Activated CD4-positive, alpha-beta memory T cell treated with anti-CD3 and anti-CD28 coated beads for 36 hours (primary cell): ENCODE measurements at regions of chr11 and their contacts with region 1.

Region 1: GRCh38 chr11:18634140-18635032 is at the start of gene SPTY2D1:
- DNase-seq: peak; percentile 99
- H3K4me3 Mint-ChIP-seq: peak within 1 kb of the TSS; percentile 89
- H3K27ac Mint-ChIP-seq: peak within 1 kb of the TSS; percentile 99
- H3K4me1 Mint-ChIP-seq: peaks cover 22% of the 10 kb centered on the region
- H3K27me3 Mint-ChIP-seq: no peaks in the 10 kb centered on the region
- total RNA-seq, gene SPTY2D1: 18.7 to 23.4 TPM

Region 2: GRCh38 chr11:18012863-18013781 is 621.3 kb before region 1 on chr11 and contains the start of gene SERGEF:
- CTCF ChIA-PET with region 1: no interaction called
- POLR2A ChIA-PET with region 1: no interaction called
- intact Hi-C with region 1: loop called (anchors 1 kb)
- DNase-seq: peak; percentile 95
- H3K4me3 Mint-ChIP-seq: peak within 1 kb of the TSS; percentile 93
- H3K27ac Mint-ChIP-seq: peak within 1 kb of the TSS; percentile 88
- H3K4me1 Mint-ChIP-seq: peaks cover 40% of the 10 kb centered on the region
- H3K27me3 Mint-ChIP-seq: no peaks in the 10 kb centered on the region
- total RNA-seq, gene SERGEF: 42.7 to 44.2 TPM

Region 3: DNA sequence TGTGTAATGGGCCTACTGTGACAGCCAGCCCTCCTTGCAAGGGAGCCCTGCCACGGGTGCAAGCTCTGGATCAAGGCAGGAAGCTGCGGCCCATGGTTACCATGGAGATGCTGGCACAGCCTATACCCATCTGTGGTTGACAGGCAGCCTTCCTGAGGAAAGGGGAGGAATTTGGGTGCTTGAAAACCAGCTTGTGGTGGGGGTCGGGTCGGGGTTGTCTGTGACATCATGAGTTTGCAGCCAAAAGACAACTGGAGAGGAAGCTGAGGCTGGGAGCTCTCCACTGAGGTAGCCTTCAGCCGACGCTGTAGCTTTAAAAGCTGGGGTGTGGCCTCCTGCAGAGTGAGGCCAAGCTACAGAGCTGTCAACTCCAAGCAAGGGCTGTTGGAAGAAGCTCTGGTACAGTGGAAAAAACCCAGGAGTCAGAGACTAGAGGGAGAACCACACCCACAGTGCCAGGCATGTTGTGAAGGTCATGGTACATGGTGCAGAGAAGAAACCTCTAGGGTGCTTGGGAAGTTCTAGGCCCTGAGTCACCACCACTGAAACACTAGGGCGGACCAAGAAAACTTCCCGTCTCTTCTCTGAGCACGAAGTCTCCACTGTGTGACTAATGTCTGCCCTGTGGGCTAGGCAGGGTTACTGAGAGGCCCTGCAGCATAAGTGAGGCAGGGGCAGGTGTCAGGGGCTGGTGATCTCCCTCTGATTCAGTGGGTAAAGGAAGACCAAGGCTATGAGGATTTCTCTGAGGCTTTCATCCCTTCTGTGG is 250.8 kb before region 1 on chr11:
- CTCF ChIA-PET with region 1: no interaction called
- POLR2A ChIA-PET with region 1: no interaction called
- intact Hi-C with region 1: loop called (anchors 1 kb)
- DNase-seq: peak; percentile 92
- H3K4me3 Mint-ChIP-seq: peak overlapping the region; percentile 59
- H3K27ac Mint-ChIP-seq: peak overlapping the region; percentile 99
- H3K4me1 Mint-ChIP-seq: peaks cover 43% of the 10 kb centered on the region
- H3K27me3 Mint-ChIP-seq: no peaks in the 10 kb centered on the region

Region 4: DNA sequence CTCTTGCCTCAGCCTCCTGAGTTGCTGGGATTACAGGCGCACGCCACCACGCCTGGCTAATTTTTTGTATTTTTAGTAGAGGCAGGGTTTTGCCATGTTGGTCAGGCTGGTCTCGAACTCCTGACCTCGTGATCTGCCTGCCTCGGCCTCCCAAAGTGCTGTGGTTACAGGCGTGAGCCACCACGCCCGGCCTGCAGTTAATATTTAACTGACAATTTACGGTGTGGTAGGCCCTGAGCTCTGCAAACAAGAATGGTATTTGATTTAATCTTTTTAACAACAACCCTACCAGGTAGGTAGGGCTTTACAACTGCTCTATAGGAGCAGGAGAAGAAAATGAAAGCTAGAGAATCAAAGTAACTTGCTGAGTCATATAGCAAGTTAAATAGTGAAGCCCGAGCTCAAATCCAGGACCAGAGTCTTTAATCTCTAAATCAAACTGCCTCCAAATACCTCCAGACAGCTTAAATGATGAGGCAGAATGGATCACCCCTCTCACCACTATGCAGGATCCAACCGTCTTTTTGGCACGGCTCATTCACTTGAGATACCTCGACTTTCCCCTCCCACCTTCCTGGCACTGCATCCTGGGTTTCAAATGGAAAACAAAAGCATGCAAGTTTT is 55.3 kb before region 1 on chr11:
- CTCF ChIA-PET with region 1: interaction called, 3 read pairs
- POLR2A ChIA-PET with region 1: interaction called, 8 read pairs
- intact Hi-C with region 1: loop called (anchors 2 kb)
- DNase-seq: peak; percentile 39
- H3K4me3 Mint-ChIP-seq: peak overlapping the region; percentile 57
- H3K27ac Mint-ChIP-seq: peak overlapping the region; percentile 70
- H3K4me1 Mint-ChIP-seq: peaks cover 21% of the 10 kb centered on the region
- H3K27me3 Mint-ChIP-seq: no peaks in the 10 kb centered on the region

Region 5: GRCh38 chr11:18650859-18651557 is 16.6 kb after region 1 on chr11:
- CTCF ChIA-PET with region 1: interaction called, 24 read pairs
- POLR2A ChIA-PET with region 1: no interaction called
- intact Hi-C with region 1: no loop called
- DNase-seq: peak; percentile 58
- H3K4me3 Mint-ChIP-seq: peak overlapping the region; percentile 17
- H3K27ac Mint-ChIP-seq: no peak overlapping the region
- H3K4me1 Mint-ChIP-seq: peaks cover 4% of the 10 kb centered on the region
- H3K27me3 Mint-ChIP-seq: no peaks in the 10 kb centered on the region

Region 6: DNA sequence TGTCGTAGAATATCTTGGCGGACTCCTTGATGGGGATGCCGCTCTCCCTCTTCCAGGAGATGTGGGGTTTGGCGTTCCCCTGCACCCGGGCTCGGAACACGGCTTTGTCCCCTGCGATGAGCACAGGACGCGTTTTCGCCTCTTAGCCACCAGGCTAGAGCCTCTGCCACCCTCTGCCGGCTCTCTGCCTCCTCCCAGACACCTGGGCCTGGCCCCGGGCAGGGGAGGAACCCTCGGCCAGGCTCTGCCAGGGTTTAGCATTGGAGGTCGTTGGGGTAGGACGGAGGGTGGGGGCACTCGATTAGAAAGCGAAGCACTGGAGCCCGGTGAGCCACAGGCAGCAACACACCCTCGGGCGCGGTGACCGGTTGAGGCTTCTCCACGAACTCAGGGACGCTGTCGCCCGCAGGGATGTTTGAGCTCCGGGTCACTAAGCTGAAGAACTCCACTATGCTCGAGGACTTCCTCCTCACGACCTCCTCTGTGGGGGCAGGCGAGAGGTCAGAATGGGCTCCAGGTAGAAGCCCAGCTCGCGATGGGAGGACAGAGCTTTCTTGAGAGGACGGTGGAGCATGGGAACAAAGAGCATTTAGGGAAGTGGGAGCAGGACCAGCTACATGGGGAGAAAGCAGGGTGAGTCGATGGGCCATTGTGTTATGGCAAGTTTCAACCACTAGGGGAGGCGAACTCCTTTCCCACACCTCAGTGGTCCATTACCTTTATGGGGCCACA is 87.3 kb after region 1 on chr11:
- CTCF ChIA-PET with region 1: interaction called, 24 read pairs
- POLR2A ChIA-PET with region 1: interaction called, 3 read pairs
- intact Hi-C with region 1: no loop called
- DNase-seq: peak; percentile 60
- H3K4me3 Mint-ChIP-seq: peak overlapping the region; percentile 81
- H3K27ac Mint-ChIP-seq: no peak overlapping the region
- H3K4me1 Mint-ChIP-seq: peaks cover 6% of the 10 kb centered on the region
- H3K27me3 Mint-ChIP-seq: no peaks in the 10 kb centered on the region